Transverse colon (tissue), 4 donors: ENCODE measurements at regions of chr9 and their contacts with region 1.

Region 1: GRCh38 chr9:104386425-104387069 is 117.5 kb upstream of the OR13F1 start:
- DNase-seq: no peak
- H3K4me3 ChIP-seq: no peak overlapping the region
- H3K27ac ChIP-seq: no peak overlapping the region
- H3K4me1 ChIP-seq: peaks cover 0 to 5% (median 0%) of the 10 kb centered on the region in 4 donors
- H3K27me3 ChIP-seq: no peaks in the 10 kb centered on the region
- CTCF ChIP-seq: peak; percentile 58 to 68 (median 65)
- EP300 ChIP-seq: no peak
- POLR2A ChIP-seq: no peak

Region 2: DNA sequence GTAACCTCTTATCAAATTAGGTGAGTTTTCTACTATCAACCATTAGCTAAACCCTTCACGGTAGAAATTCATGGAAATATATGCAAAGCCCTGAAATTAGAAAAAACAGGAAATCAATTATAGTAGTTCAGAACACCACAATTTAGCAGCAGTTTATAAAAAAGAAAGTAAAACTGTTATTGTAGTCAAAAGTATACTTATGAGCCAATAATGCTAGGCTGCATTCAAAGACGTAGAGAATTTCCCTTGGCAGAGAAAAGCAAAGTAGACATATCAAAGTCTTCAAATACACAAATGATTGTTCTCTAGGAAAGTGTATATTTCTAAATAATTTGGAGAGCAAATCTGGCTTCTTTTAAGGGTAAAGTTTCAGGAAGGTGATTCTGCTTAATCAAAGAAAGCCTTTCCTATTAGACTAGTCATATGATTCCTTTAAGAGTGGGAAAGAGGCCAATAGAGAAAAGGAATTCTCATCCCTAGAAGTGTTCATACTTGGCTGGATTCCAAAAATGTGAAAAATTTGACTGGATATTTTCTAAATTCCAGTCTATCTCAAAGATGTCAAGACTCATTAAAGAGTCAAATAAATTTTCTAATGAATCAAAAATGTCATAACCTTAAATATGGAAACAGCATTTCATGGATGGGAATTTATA is 106.9 kb before region 1 on chr9:
- in situ Hi-C with region 1: loop called in 1 of 4 experiments (anchors 25 kb)
- intact Hi-C with region 1: no loop called
- DNase-seq: no peak
- H3K4me3 ChIP-seq: no peak overlapping the region
- H3K27ac ChIP-seq: no peak overlapping the region
- H3K4me1 ChIP-seq: no peaks in the 10 kb centered on the region
- H3K27me3 ChIP-seq: no peaks in the 10 kb centered on the region
- CTCF ChIP-seq: no peak
- EP300 ChIP-seq: no peak
- POLR2A ChIP-seq: no peak